IMR-90 (cell line): ENCODE measurements at regions of chr4 and their contacts with region 1.

Region 1: DNA sequence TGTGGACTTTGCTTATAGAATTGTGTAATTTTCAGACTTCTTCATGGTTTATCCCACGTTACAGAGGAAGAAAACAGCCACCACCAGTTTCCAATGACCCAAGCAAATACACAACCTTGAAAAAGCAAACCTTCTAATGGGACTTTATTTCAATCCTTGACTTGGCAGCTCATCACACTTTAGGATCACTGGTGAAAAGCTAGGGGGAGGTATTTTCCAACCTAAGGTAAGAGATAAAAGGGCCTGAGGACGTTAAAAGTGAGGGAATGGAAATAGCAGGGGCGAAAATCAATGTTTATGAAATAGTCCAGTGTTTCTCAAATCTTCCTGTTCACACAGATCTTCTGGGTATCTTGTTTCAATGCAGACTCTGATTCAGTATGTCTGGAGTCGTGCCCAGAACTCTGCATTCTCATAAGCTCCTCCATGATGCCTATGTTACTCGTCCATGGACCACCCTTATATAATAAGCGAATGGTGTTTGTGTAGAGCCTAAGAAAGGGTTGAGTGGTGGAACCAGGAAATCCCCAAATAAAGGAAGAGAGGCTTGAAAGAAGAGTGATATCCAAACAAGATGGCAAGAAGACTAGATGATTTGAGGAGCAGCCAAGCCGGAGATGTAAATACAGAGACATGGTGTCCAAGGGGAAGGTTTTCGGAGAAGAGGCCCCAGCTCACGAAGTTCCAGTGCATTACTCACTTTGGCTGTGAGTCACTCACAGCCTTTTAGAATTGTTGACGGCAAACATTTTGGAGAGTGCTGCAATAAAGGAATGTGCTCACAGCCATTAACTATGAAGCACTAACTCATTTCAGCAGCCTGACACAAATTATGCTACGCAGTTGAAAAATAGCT is 215.6 kb upstream of the PPARGC1A start:
- DNase-seq: peak; percentile 99
- ATAC-seq: peak; percentile 84
- H3K4me3 ChIP-seq: peak overlapping the region; percentile 21; the same call in 1 of the 2 replicates
- H3K27ac ChIP-seq: peak overlapping the region; percentile 86
- H3K4me1 ChIP-seq: peaks cover 24% of the 10 kb centered on the region
- H3K27me3 ChIP-seq: no peaks in the 10 kb centered on the region
- CTCF ChIP-seq: peak; percentile 16; the same call in 1 of the 2 replicates
- POLR2A ChIP-seq: no peak; the same call in 1 of the 2 replicates
- RAD21 ChIP-seq: peak; percentile 25

Region 2: DNA sequence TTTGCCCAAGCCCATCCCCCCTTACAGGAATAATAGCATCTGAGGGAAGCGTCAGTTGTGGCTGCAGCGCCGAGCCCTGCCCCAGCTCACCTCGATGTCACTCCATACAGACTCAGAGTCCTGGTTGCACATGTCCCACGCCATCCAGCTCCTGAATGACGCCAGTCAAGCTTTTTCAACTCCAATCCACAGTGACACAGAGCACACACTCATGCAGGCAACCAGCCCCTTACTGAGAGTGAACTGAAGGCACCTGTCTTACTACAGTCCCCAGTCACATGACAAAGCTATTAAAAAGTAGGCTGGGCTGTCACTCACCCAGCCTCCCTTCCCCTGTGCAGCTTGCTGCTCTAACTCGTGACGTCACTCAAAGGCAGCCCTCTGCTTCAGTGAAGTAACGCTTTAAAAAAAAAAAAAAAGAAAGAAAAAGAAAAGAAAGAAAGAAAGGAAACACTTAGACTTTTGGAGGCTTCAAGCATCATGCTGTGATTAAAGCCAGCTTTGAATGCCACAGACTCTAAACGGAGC is 215.5 kb before region 1 on chr4 and contains the start of gene PPARGC1A:
- CTCF ChIA-PET with region 1: no interaction called
- POLR2A ChIA-PET with region 1: no interaction called
- dilution Hi-C with region 1: no loop called
- in situ Hi-C with region 1: no loop called
- intact Hi-C with region 1: loop called (anchors 5 kb)
- DNase-seq: peak; percentile 50
- ATAC-seq: peak; percentile 33; the same call in 1 of the 2 replicates
- H3K4me3 ChIP-seq: peak within 1 kb of the TSS; percentile 35
- H3K27ac ChIP-seq: peak within 1 kb of the TSS; percentile 1
- H3K4me1 ChIP-seq: peaks cover 4% of the 10 kb centered on the region
- H3K27me3 ChIP-seq: no peaks in the 10 kb centered on the region
- CTCF ChIP-seq: no peak
- POLR2A ChIP-seq: no peak
- RAD21 ChIP-seq: no peak
- total RNA-seq, gene PPARGC1A: under 0.01 TPM in 2 replicates

Region 3: DNA sequence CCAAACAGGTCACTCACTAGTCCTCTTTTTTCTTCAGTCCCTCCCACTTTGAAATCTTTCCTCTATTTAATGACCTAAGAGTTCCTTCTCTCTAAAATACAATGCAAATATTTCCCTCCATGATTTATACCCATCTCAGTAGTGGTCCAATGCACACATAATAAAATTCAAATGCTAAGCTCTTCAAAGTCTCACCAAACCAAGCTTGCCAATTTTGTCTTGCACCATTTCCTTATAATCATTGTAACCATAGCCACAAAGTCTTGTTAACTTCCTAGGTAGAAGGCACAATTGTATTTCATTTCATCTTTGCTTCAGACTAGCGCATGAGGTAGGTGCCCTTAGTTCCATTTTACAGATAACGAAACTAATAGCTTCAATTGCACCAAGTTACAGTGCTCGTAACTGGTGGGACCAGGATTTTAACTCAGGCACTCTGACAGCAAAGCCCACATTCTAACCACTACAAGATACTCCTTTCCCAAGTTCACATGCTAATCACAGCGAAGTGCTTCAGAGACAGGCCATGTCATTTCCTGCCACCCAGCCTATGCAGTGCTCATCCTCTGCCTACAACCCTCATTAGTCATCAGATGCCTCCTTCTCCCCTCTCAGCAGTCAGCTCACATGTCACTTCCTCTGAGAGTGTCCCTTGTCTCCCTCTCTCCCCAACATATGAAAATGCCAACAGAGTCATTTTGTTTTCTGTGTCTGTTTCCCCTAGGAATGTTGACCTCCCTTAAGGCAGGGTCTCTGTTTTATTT is 148.6 kb before region 1 on chr4:
- CTCF ChIA-PET with region 1: no interaction called
- POLR2A ChIA-PET with region 1: no interaction called
- dilution Hi-C with region 1: no loop called
- in situ Hi-C with region 1: no loop called
- intact Hi-C with region 1: no loop called
- DNase-seq: peak; percentile 43
- ATAC-seq: no peak
- H3K4me3 ChIP-seq: no peak overlapping the region
- H3K27ac ChIP-seq: no peak overlapping the region
- H3K4me1 ChIP-seq: no peaks in the 10 kb centered on the region; the same call in 1 of the 2 replicates
- H3K27me3 ChIP-seq: no peaks in the 10 kb centered on the region
- CTCF ChIP-seq: no peak
- POLR2A ChIP-seq: no peak
- RAD21 ChIP-seq: no peak

Region 4: DNA sequence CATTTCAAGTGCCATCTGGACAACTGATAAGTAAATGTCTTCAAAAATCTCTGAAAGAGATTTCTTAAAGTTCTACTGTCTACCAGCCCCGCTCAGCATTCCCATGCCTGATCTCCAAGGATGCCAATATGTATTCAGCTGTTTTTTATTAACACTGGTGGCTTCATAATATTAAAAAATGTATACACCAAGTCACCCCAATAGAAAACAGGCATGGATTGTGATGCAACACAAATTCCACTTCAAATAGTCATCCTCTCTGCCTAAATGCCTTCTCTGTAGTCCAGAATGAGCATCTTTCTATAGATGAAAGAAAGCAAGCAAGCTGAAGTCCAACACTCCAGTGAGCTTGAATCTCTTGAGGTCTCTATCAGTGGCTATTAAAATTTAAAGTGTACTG is 63.3 kb before region 1 on chr4:
- CTCF ChIA-PET with region 1: interaction called, 4 read pairs
- POLR2A ChIA-PET with region 1: no interaction called
- dilution Hi-C with region 1: no loop called
- in situ Hi-C with region 1: no loop called
- intact Hi-C with region 1: loop called (anchors 2 kb)
- DNase-seq: peak; percentile 97
- ATAC-seq: peak; percentile 93
- H3K4me3 ChIP-seq: no peak overlapping the region
- H3K27ac ChIP-seq: peak overlapping the region; percentile 77; the same call in 1 of the 2 replicates
- H3K4me1 ChIP-seq: peaks cover 8% of the 10 kb centered on the region
- H3K27me3 ChIP-seq: no peaks in the 10 kb centered on the region
- CTCF ChIP-seq: no peak
- POLR2A ChIP-seq: no peak
- RAD21 ChIP-seq: no peak

Region 5: GRCh38 chr4:24137963-24138601 is 32.7 kb after region 1 on chr4:
- CTCF ChIA-PET with region 1: no interaction called
- POLR2A ChIA-PET with region 1: no interaction called
- dilution Hi-C with region 1: no loop called
- in situ Hi-C with region 1: no loop called
- intact Hi-C with region 1: no loop called
- DNase-seq: no peak
- ATAC-seq: peak; percentile 40
- H3K4me3 ChIP-seq: no peak overlapping the region
- H3K27ac ChIP-seq: no peak overlapping the region
- H3K4me1 ChIP-seq: peaks cover 3% of the 10 kb centered on the region; the same call in 1 of the 2 replicates
- H3K27me3 ChIP-seq: peaks cover under 1% of the 10 kb centered on the region
- CTCF ChIP-seq: no peak
- POLR2A ChIP-seq: no peak
- RAD21 ChIP-seq: no peak

Region 6: GRCh38 chr4:24210332-24210902 is 105.0 kb after region 1 on chr4:
- CTCF ChIA-PET with region 1: no interaction called
- POLR2A ChIA-PET with region 1: no interaction called
- dilution Hi-C with region 1: no loop called
- in situ Hi-C with region 1: no loop called
- intact Hi-C with region 1: loop called (anchors 5 kb)
- DNase-seq: peak; percentile 96
- ATAC-seq: peak; percentile 93
- H3K4me3 ChIP-seq: no peak overlapping the region
- H3K27ac ChIP-seq: peak overlapping the region; percentile 81; the same call in 1 of the 2 replicates
- H3K4me1 ChIP-seq: peaks cover 10% of the 10 kb centered on the region
- H3K27me3 ChIP-seq: no peaks in the 10 kb centered on the region
- CTCF ChIP-seq: no peak
- POLR2A ChIP-seq: no peak
- RAD21 ChIP-seq: no peak

Region 7: GRCh38 chr4:24521544-24521943 is 416.1 kb after region 1 on chr4:
- CTCF ChIA-PET with region 1: no interaction called
- POLR2A ChIA-PET with region 1: interaction called, 10 read pairs
- dilution Hi-C with region 1: no loop called
- in situ Hi-C with region 1: no loop called
- intact Hi-C with region 1: no loop called
- DNase-seq: peak; percentile 23
- ATAC-seq: no peak; the same call in 1 of the 2 replicates
- H3K4me3 ChIP-seq: no peak overlapping the region
- H3K27ac ChIP-seq: no peak overlapping the region
- H3K4me1 ChIP-seq: peaks cover 3% of the 10 kb centered on the region; the same call in 1 of the 2 replicates
- H3K27me3 ChIP-seq: no peaks in the 10 kb centered on the region
- CTCF ChIP-seq: no peak
- POLR2A ChIP-seq: no peak
- RAD21 ChIP-seq: no peak